Left cardiac atrium (tissue), 4 donors: ENCODE measurements at regions of chr9 and their contacts with region 1.

Region 1: DNA sequence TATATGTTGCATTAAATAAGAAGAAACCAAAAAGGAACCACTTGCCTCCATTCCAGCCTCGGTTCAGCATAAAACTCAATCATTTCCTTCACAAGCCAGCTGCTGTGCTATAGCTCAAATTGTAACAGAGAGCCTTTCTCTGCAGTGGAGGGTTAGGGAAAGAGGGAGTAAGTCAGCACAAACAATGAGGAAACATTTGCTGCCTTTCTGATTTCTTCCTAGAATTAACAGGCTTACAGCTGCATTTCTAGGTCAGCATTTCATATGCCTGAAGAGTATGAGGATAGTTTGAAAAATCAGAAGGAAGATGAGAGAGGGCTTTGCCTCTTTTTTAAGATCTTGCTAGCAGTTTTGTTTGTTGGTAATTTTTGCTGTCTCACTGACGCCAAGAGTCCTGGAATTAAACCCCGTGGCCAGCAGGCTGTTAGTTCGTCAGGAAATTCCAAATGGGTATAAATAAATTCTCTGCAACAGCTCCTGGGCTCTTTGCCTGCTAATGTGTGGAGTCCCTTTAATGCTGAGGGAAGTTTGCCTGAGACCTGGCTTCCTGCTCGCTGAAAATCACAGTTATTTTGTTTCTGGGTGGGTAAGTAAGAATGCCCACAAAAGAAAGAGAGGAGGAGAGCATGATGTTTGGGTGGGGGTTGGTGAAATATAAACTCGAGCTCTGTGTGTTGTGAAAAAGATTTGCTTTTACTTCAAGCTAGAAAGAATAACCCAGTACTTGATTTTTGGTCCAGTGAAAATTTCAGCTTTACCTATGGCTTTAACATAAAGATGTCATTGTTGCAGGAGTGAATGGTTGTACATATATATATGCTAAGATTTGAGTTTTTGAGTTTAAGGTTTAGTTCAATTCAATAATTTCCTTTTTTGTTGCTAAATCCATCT is 148.1 kb upstream of the DMRT1 start:
- DNase-seq: peak; percentile 59
- ATAC-seq: peak; percentile 60 to 67

Region 2: DNA sequence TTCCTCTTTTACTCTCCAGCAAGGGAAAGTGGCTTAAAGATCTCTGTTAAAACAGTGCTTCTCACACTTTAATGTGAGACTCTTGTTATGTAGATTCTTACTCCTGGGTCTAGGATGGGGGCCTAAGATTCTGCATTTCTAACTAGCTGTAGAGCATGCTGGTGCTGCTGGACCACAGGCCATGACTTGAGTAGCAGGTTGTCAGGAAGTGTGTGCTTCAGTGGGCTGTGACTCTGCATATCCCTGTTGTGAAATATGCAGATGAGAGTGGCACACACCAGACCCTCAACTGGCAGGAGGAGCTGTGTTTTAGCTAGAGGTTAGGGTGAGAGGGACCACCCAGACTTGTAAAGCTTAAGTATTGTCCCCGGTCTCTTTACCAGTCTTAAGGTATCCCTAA is 43.1 kb before region 1 on chr9:
- intact Hi-C with region 1: loop called (anchors 5 kb)
- DNase-seq: no peak
- ATAC-seq: peak in 1 of 2 donors; percentile 31

Region 3: DNA sequence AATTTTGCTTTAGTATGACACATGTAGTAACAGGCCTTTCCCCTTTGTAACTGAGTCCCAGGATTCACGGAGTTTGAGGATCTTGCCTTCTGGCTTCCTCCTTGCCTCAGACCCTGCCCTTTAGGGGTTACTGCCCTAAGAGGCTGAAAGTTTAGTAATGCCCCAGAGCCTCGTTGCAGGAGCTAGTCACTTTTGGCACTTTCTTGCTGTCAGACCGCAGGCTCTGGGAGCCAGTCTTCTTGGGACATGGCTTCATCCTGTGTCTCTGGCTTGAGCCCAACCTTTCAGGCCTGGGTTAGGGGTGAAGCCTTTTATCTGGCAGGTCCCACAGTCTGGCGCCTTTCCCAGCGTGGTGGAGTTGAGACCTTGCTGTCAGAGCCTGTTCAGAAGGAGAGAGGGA is 37.6 kb before region 1 on chr9:
- intact Hi-C with region 1: loop called (anchors 5 kb)
- DNase-seq: peak; percentile 95
- ATAC-seq: peak; percentile 87 to 90

Region 4: GRCh38 chr9:751137-752051 is 57.9 kb after region 1 on chr9:
- intact Hi-C with region 1: loop called in 1 of 2 experiments (anchors 5 kb)
- DNase-seq: no peak
- ATAC-seq: peak; percentile 39 to 45